HCT116 (cell line): ENCODE measurements at regions of chr20 and their contacts with region 1.

Region 1: DNA sequence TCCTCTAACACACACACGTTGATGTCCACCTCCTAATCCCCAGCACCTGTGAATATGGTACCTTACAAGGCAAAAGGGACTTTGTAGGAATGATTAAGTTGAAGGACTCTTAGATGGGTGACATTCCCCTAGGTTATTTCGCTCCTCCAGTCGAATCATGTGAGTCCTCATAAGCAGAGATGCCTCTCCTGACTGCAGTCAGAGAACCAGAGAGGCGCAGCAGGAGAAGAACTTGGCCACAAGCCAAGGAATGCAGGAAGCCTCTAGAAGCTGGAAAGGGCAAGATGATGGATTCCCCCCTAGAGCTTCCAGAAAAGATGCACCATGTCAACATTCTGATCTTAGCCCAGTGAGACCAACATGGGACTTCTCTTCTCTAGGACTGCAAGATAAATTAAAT is 133.1 kb upstream of the PTPRT start:
- DNase-seq: no peak
- ATAC-seq: no peak
- H3K4me3 ChIP-seq: no peak overlapping the region
- H3K27ac ChIP-seq: no peak overlapping the region
- H3K4me1 ChIP-seq: no peaks in the 10 kb centered on the region
- H3K27me3 ChIP-seq: peaks cover 29% of the 10 kb centered on the region
- CTCF ChIP-seq: no peak
- POLR2A ChIP-seq: no peak
- RAD21 ChIP-seq: no peak

Region 2: DNA sequence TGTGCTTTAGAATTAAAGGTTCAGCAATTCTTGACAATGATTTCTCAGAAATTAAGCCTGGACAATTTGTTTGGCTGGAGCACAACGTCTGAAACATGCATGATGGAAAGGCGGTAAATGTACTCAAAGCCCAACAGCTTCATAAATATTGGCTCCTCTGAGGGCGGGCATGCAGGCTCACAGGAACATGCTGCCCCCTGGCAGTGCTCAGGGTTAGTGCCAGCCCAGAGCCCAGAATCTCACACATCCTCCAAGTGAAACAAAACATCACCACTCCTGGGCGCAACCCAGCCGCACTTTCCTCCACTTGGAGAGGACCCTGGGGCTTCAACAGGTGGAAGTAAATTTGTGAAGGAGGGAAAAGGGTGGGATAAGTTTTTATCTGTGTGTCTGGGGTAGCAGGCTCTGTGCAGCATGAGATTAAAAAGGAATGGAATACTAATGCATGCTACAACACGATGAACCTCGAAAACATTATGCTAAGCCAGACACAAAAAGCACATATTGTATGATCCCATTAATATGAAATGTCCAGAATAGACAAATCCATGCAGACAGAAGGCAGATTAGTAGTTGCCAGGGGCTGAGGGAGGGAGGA is 79.1 kb before region 1 on chr20:
- CTCF ChIA-PET with region 1: no interaction called
- POLR2A ChIA-PET with region 1: no interaction called
- RAD21 ChIA-PET with region 1: no interaction called
- intact Hi-C with region 1: no loop called
- DNase-seq: no peak
- ATAC-seq: peak; percentile 79
- H3K4me3 ChIP-seq: no peak overlapping the region
- H3K27ac ChIP-seq: no peak overlapping the region
- H3K4me1 ChIP-seq: no peaks in the 10 kb centered on the region
- H3K27me3 ChIP-seq: peaks cover 62% of the 10 kb centered on the region
- CTCF ChIP-seq: peak in 2 of 3 experiments; percentile 42 to 45; a peak in 4 of 6 replicates
- POLR2A ChIP-seq: no peak
- RAD21 ChIP-seq: 0 out of 2 replicates have a peak, but pooled peaks have one; percentile 22

Region 3: DNA sequence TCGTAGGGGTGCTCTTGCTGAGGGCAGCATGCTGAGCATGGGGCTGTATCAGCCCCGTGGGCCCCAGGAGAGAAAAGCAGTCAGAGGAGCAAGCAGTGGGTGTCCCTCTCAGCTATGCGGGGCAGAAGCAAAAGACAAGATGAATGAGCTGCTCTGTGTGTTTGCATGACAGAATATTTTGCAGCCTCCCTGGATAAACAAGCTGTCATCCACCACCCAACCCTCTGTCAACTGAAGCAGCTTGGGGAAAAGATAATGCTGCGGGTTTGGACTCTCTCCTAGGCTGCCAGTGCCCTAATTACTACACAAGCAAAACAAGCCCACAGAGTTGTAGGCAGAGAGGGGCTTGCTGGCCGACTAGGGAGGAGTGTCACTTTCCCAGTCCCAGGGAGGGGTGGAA is 50.9 kb before region 1 on chr20:
- CTCF ChIA-PET with region 1: no interaction called
- POLR2A ChIA-PET with region 1: no interaction called
- RAD21 ChIA-PET with region 1: no interaction called
- intact Hi-C with region 1: loop called (anchors 5 kb)
- DNase-seq: no peak
- ATAC-seq: no peak
- H3K4me3 ChIP-seq: no peak overlapping the region
- H3K27ac ChIP-seq: no peak overlapping the region
- H3K4me1 ChIP-seq: no peaks in the 10 kb centered on the region
- H3K27me3 ChIP-seq: peaks cover 27% of the 10 kb centered on the region
- CTCF ChIP-seq: no peak
- POLR2A ChIP-seq: no peak
- RAD21 ChIP-seq: no peak

Region 4: GRCh38 chr20:43334080-43334479 is 11.2 kb after region 1 on chr20:
- CTCF ChIA-PET with region 1: no interaction called
- POLR2A ChIA-PET with region 1: no interaction called
- RAD21 ChIA-PET with region 1: no interaction called
- intact Hi-C with region 1: no loop called
- DNase-seq: no peak
- ATAC-seq: no peak
- H3K4me3 ChIP-seq: no peak overlapping the region
- H3K27ac ChIP-seq: no peak overlapping the region
- H3K4me1 ChIP-seq: no peaks in the 10 kb centered on the region
- H3K27me3 ChIP-seq: no peaks in the 10 kb centered on the region
- CTCF ChIP-seq: no peak
- POLR2A ChIP-seq: no peak
- RAD21 ChIP-seq: no peak

Region 5: GRCh38 chr20:43345676-43346075 is 22.8 kb after region 1 on chr20:
- CTCF ChIA-PET with region 1: no interaction called
- POLR2A ChIA-PET with region 1: no interaction called
- RAD21 ChIA-PET with region 1: no interaction called
- intact Hi-C with region 1: no loop called
- DNase-seq: no peak
- ATAC-seq: no peak
- H3K4me3 ChIP-seq: no peak overlapping the region
- H3K27ac ChIP-seq: no peak overlapping the region
- H3K4me1 ChIP-seq: no peaks in the 10 kb centered on the region
- H3K27me3 ChIP-seq: peaks cover 33% of the 10 kb centered on the region
- CTCF ChIP-seq: no peak
- POLR2A ChIP-seq: no peak
- RAD21 ChIP-seq: no peak

Region 6: GRCh38 chr20:43752561-43753301 is 429.9 kb after region 1 on chr20:
- CTCF ChIA-PET with region 1: no interaction called
- POLR2A ChIA-PET with region 1: no interaction called
- RAD21 ChIA-PET with region 1: no interaction called
- intact Hi-C with region 1: no loop called
- DNase-seq: no peak
- ATAC-seq: no peak
- H3K4me3 ChIP-seq: no peak overlapping the region
- H3K27ac ChIP-seq: no peak overlapping the region
- H3K4me1 ChIP-seq: peaks cover 0 to 17% of the 10 kb centered on the region in 2 experiments; a peak in 2 of 4 replicates
- H3K27me3 ChIP-seq: no peaks in the 10 kb centered on the region
- CTCF ChIP-seq: no peak
- POLR2A ChIP-seq: no peak
- RAD21 ChIP-seq: no peak